ENCODE measurements at regions of chr14 and their contacts with region 1.

Region 1: GRCh38 chr14:69543341-69544249 is 31.1 kb downstream of the CCDC177 start:
- DNase-seq: no peak
- H3K4me3 ChIP-seq: no peak overlapping the region
- H3K27ac ChIP-seq: no peak overlapping the region
- H3K4me1 ChIP-seq: peaks cover 0 to 6% (median under 1%) of the 10 kb centered on the region in 4 experiments; a peak in 4 of 7 replicates
- H3K27me3 ChIP-seq: no peaks in the 10 kb centered on the region; a peak in 3 of 7 replicates
- CTCF ChIP-seq: no peak
- EP300 ChIP-seq: no peak
- POLR2A ChIP-seq: no peak
- RAD21 ChIP-seq: no peak

Region 2: GRCh38 chr14:69335371-69335771 is 208.2 kb before region 1 on chr14:
- CTCF ChIA-PET with region 1: no interaction called
- POLR2A ChIA-PET with region 1: no interaction called
- DNase-seq: no peak
- H3K4me3 ChIP-seq: no peak overlapping the region
- H3K27ac ChIP-seq: no peak overlapping the region
- H3K4me1 ChIP-seq: peaks cover 0 to 2% (median 0%) of the 10 kb centered on the region in 4 experiments; a peak in 1 of 7 replicates
- H3K27me3 ChIP-seq: no peaks in the 10 kb centered on the region
- CTCF ChIP-seq: no peak
- EP300 ChIP-seq: no peak
- POLR2A ChIP-seq: no peak
- RAD21 ChIP-seq: no peak

Region 3: GRCh38 chr14:69439521-69440270 is 103.9 kb before region 1 on chr14:
- CTCF ChIA-PET with region 1: no interaction called
- POLR2A ChIA-PET with region 1: no interaction called
- DNase-seq: peak in 1 of 2 experiments; percentile 56
- H3K4me3 ChIP-seq: no peak overlapping the region
- H3K27ac ChIP-seq: no peak overlapping the region
- H3K4me1 ChIP-seq: peaks cover 0 to 4% (median 2%) of the 10 kb centered on the region in 4 experiments; a peak in 1 of 7 replicates
- H3K27me3 ChIP-seq: no peaks in the 10 kb centered on the region
- CTCF ChIP-seq: no peak
- EP300 ChIP-seq: no peak
- POLR2A ChIP-seq: no peak
- RAD21 ChIP-seq: no peak

Region 4: GRCh38 chr14:69501423-69501838 is 42.2 kb before region 1 on chr14:
- CTCF ChIA-PET with region 1: interaction called, 19 read pairs
- POLR2A ChIA-PET with region 1: no interaction called
- DNase-seq: no peak
- H3K4me3 ChIP-seq: no peak overlapping the region
- H3K27ac ChIP-seq: no peak overlapping the region
- H3K4me1 ChIP-seq: peaks cover 0 to 5% (median 1%) of the 10 kb centered on the region in 4 experiments; a peak in 2 of 7 replicates
- H3K27me3 ChIP-seq: no peaks in the 10 kb centered on the region; a peak in 1 of 7 replicates
- CTCF ChIP-seq: no peak
- EP300 ChIP-seq: no peak
- POLR2A ChIP-seq: no peak
- RAD21 ChIP-seq: no peak

Region 5: GRCh38 chr14:69559581-69560011 is 16.0 kb after region 1 on chr14:
- CTCF ChIA-PET with region 1: interaction called, 61 read pairs
- POLR2A ChIA-PET with region 1: interaction called, 3 read pairs
- DNase-seq: no peak
- H3K4me3 ChIP-seq: no peak overlapping the region
- H3K27ac ChIP-seq: no peak overlapping the region
- H3K4me1 ChIP-seq: no peaks in the 10 kb centered on the region; a peak in 1 of 7 replicates
- H3K27me3 ChIP-seq: no peaks in the 10 kb centered on the region
- CTCF ChIP-seq: no peak
- EP300 ChIP-seq: no peak
- POLR2A ChIP-seq: no peak
- RAD21 ChIP-seq: no peak

Region 6: GRCh38 chr14:69657950-69658355 is 114.4 kb after region 1 on chr14:
- CTCF ChIA-PET with region 1: no interaction called
- POLR2A ChIA-PET with region 1: no interaction called
- DNase-seq: no peak
- H3K4me3 ChIP-seq: no peak overlapping the region
- H3K27ac ChIP-seq: no peak overlapping the region
- H3K4me1 ChIP-seq: peaks cover 13 to 19% (median 16%) of the 10 kb centered on the region in 4 experiments
- H3K27me3 ChIP-seq: no peaks in the 10 kb centered on the region
- CTCF ChIP-seq: no peak
- EP300 ChIP-seq: no peak
- POLR2A ChIP-seq: no peak
- RAD21 ChIP-seq: no peak

Measured in H1 (cell line).